MCF 10A (cell line): ENCODE measurements at regions of chr17 and their contacts with region 1.

Region 1: DNA sequence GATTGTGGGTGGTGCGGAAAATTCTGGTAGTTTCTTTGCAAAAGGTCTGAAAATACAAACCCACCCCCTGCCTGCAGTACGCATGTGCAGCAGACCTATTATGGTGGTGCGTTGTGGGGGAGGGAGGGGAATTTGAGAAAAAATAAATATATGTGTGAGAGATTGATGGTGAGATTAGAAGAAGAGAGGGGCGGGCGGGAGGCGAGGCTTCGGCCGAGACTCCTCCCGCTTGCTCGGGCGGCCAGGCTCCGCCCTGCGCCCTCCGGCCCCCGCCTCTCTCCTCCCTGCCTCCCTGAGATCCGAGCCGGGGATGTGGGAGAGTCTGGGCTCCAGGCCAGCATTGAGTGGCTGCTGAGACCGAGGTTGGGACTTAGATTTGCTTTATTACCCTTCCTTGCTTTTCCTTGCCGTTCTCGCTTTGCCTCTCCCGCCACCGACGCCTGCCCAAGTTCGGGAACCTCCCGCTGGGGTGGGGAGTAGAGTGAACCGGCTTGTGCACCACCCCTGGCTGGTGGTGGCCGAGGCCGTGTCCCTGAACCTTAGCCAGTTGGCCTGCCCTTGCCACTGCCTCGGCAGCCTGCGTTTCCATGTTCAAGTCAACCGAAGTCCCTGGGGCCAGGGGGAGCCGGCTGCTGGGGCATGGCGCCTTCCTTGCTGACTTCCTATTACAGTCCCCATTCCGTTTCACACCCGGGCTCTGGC is 956 bp upstream of the CHD3 start:
- DNase-seq: peak; percentile 97
- H3K4me3 Mint-ChIP-seq: no peak overlapping the region
- H3K27ac Mint-ChIP-seq: no peak overlapping the region
- H3K4me1 Mint-ChIP-seq: no peaks in the 10 kb centered on the region
- H3K27me3 Mint-ChIP-seq: no peaks in the 10 kb centered on the region
- CTCF ChIP-seq: no peak

Region 2: DNA sequence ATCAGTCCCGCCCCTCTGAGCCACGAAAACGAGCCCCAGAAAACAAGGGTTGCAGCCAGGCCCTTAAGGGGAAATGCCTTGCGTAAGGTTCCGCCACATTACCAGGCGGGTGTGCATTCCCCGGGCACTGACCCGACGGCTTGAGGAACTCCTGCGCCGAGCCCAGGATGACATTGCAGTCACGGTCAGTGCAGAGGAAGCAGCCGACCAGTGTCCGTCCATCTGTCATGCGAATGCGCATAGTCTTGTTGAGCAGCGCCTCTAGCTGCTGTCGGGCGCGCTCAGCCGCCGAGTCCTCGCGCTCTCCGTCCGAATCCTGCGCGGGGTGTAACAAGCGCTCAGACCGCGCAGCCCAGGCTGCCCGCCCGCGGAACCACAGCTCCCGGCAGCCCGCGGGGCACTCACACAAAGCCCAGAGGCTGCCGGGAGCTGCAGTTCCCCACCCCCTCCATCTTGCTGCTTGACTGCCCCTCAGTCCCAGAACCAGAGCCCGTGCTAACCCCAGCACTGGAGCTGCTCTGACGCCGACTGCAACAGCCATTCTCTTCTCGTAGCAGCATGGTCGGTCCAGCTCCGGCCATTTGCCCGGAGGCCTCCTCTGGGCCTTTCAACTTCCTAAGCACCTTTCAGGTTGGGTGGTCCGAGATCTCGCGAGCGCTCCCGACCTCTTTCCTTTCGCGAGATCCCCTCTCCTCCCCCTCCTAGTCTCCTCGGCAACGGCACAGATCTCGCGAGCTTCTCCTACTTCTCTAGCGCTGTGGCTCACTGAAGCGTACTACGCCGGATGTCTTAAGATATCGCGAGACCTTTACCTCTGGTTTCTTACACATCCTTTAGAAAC is 30.5 kb before region 1 on chr17 and contains the start of gene NAA38:
- CTCF ChIA-PET with region 1: interaction called, 25 read pairs
- POLR2A ChIA-PET with region 1: interaction called, 12 read pairs
- intact Hi-C with region 1: no loop called
- DNase-seq: peak; percentile 99
- H3K4me3 Mint-ChIP-seq: no peak within 1 kb of the TSS
- H3K27ac Mint-ChIP-seq: no peak within 1 kb of the TSS
- H3K4me1 Mint-ChIP-seq: peaks cover 7% of the 10 kb centered on the region
- H3K27me3 Mint-ChIP-seq: no peaks in the 10 kb centered on the region
- CTCF ChIP-seq: peak; percentile 22
- total RNA-seq, gene NAA38: 70.2 and 83.4 TPM in 2 replicates

Region 3: DNA sequence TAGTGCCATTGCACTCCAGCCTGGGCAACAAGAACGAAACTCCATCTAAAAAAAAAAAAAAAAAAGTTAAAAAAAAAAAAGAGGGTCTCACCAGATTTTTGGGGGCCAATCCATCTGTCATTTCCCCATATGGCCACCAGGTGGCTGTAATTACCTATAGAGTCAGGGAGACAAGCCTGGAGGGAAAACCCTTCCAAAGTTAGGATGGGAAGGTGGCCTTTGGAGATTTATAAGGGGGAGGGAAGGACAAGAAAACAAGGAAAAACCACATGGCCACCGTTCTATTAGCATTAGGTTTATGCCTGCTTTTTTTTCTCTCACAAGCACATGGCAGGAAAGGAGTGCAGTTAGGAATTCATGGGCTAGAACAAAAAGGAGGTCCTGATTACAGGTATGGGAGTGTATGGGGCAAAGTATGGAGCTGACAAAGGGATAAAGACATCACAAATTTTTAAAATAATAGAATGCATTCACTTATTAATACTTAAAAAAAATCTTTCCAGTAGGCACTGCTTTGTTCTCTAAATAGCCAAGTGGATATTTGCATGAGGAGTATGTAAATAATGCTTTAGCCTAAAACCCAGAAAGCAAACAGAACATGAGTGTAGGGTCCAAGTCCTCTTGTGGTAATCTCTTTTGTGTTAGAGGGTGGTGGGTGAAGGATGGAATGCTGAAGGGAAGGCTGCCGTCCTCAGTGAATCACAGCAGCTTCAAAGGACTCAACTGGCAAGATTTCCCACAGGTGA is 24.8 kb before region 1 on chr17:
- CTCF ChIA-PET with region 1: interaction called, 25 read pairs
- POLR2A ChIA-PET with region 1: interaction called, 23 read pairs
- intact Hi-C with region 1: no loop called
- DNase-seq: peak; percentile 62
- H3K4me3 Mint-ChIP-seq: no peak overlapping the region
- H3K27ac Mint-ChIP-seq: no peak overlapping the region
- H3K4me1 Mint-ChIP-seq: peaks cover 11% of the 10 kb centered on the region
- H3K27me3 Mint-ChIP-seq: no peaks in the 10 kb centered on the region
- CTCF ChIP-seq: peak; percentile 75

Region 4: DNA sequence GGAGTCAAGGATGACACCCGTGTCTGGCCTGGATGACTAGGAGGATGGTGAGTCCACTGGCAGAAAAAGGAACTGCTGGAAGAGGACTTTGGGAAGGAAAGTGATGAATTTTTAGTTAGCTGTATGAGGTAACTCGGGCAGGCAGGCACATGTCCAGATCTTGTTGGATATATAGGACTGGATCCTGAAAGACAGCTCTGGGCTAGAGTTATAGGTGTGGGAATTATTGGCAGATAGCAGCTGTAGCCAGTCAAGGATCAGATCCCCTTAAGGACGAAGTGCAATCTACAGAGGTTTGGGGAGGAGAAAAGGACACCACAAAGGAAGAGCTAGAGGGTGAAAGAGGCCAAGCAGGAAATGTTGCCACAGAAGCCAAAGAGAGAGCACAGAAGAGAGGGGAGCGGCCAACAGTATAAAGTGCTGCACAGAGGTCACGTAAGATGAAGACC is 19.7 kb before region 1 on chr17:
- CTCF ChIA-PET with region 1: interaction called, 25 read pairs
- POLR2A ChIA-PET with region 1: interaction called, 23 read pairs
- intact Hi-C with region 1: no loop called
- DNase-seq: peak; percentile 46
- H3K4me3 Mint-ChIP-seq: no peak overlapping the region
- H3K27ac Mint-ChIP-seq: no peak overlapping the region
- H3K4me1 Mint-ChIP-seq: peaks cover 11% of the 10 kb centered on the region
- H3K27me3 Mint-ChIP-seq: no peaks in the 10 kb centered on the region
- CTCF ChIP-seq: no peak